Left cardiac atrium (tissue), 4 donors: ENCODE measurements at regions of chr18 and their contacts with region 1.

Region 1: GRCh38 chr18:76866666-76867065 is 44.3 kb downstream of the ZNF236 start:
- DNase-seq: no peak
- ATAC-seq: no peak

Region 2: GRCh38 chr18:76838182-76838581 is 28.5 kb before region 1 on chr18:
- intact Hi-C with region 1: loop called in 1 of 2 experiments (anchors 2 kb)
- DNase-seq: no peak
- ATAC-seq: no peak